Left ventricle myocardium superior (tissue), 1 donor: ENCODE measurements at regions of chr14 and their contacts with region 1.

Region 1: GRCh38 chr14:54683882-54684794 is 117.2 kb downstream of the SAMD4A start:
- DNase-seq: peak; percentile 52
- ATAC-seq: no peak

Region 2: DNA sequence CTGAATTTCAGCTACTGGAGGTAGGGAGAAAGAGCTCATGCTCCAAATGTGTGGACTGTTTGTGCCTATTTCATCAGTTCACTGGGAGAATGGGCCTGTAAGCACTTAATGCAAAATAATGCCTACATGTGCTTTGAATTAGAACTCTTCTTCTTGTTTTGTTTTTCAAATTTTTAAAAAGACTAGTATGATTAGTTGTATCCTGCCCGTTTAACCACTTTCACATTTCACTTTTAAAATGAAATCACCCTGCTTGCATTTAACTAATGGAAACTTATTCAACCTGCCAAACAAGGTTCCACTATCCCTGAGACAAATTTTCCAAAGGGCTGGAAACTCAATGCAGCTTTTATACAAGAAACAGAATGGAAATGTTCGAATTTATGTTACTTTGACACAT is 37.5 kb before region 1 on chr14:
- intact Hi-C with region 1: loop called (anchors 5 kb)
- DNase-seq: no peak
- ATAC-seq: no peak

Region 3: DNA sequence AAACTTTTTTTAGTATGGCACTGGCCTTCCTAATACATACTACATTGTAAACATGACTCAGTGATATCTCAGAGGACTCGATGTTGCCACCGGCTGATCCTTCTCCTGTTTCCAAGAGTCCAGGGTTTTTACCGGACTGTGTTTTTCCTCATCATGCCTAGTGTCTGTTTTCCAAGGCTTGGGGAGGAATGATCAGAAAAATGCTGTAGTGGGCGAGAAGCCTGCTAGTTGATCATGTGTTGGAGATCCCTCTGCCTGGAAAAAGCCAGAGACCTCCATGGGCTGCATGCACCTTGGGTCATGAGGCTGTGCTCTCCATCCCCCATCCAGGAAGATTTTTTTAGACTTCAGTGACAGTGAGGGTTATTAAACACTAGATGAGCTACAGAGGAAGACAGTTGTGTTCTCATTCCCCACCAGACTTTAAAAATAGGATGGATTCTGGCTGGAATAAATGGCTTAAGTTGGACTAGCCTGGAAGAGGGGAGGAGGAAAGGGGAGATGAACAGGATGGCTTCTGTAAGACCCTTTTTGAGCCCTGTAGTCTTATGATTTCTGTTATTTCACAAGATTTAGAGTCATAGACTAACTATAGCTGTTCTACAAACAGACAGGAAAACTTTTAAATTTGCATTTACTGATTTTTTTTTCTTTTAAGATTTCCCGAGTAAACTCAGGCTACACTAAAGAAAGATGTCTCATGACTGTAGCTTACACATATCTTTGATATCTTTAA is 28.5 kb after region 1 on chr14:
- intact Hi-C with region 1: no loop called
- DNase-seq: no peak
- ATAC-seq: peak; percentile 77

Region 4: GRCh38 chr14:55926012-55926411 is 1241.9 kb after region 1 on chr14:
- intact Hi-C with region 1: no loop called
- DNase-seq: no peak
- ATAC-seq: peak; percentile 41